ENCODE measurements at regions of chr19 and their contacts with region 1.

Region 1: GRCh38 chr19:6218491-6219162 is 61.1 kb downstream of the MLLT1 start:
- DNase-seq: no peak
- H3K4me3 ChIP-seq: no peak overlapping the region
- H3K27ac ChIP-seq: peak overlapping the region; percentile 39
- H3K27me3 ChIP-seq: no peaks in the 10 kb centered on the region
- CTCF ChIP-seq: peak; percentile 94

Region 2: DNA sequence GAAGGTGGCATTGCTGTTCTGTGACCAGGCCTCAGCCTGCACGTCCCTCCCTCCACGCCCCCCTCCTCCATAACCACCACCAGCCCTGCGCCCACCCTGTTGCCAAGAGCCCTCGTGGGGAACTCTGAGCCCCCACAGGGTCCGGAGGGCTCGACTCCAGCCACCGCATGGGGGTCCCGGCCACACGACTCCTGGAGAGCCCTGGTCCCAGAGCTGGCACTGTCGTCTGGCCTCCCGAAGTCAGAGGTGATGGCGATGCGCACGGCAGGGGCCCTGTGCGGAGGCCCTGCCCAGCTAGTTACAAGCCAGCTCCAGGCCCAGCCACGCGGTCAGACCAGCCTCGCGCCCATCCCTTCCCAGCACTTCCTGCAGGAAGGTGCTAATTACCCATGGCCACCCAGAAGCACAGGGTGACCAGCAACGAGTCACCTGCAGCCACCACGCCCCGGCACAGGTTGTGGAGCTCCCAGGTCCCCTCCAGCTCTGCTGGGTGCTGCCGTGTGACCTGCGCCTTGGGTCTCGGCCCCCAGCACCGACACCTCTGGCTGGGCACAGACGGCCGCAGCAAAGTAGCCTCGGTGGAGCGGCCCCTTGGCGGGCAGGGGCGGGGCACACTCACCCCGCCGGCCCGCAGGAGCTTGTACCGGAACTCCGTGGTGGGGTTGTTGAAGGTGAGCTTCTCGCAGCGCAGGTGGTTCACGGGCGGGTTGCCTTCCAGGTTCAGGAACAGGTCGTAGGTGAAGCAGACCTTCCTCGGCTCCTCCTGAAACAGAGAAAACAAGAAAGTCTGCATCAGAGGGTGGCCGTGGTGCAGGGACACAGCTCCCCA is 11.5 kb after region 1 on chr19:
- CTCF ChIA-PET with region 1: interaction called, 26 read pairs
- POLR2A ChIA-PET with region 1: no interaction called
- DNase-seq: no peak
- H3K4me3 ChIP-seq: no peak overlapping the region
- H3K27ac ChIP-seq: no peak overlapping the region
- H3K27me3 ChIP-seq: no peaks in the 10 kb centered on the region
- CTCF ChIP-seq: no peak

Region 3: DNA sequence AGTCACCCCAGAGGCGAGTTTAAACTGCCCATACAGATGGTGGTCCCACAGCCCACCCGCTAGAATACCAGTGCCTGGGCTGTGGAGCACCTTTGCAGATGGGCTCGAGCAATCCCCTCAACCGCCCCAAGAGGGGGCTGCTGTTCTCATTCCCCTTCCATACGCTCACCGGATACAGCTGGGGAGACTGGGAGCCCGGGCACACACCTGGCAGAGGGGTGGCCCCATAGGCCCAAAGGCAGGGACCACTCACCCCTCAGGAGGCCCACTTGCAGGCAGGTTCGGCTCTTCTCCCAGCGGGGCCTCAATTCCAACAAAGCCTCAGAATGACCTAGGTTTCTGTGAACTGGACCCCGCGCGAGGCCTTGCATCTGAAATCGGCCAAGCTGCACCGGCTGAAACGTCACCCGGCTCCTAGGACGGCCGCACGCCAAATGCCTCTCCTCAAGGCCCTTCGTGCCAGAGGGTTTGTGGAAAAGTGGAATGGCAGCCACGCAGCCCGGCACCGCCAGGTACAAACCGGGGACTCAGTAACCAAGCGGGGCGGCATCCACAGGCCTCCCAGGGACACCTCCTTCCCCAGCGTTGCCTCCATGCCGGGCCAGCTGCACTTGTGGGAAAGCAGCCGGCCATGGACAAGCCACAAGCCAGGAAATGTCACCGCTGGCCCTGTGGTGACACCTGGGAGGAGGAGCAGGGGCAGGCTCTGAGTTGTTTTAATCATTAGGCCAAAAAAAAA is 42.5 kb after region 1 on chr19:
- CTCF ChIA-PET with region 1: interaction called, 14 read pairs
- POLR2A ChIA-PET with region 1: no interaction called
- DNase-seq: no peak
- H3K4me3 ChIP-seq: no peak overlapping the region
- H3K27ac ChIP-seq: no peak overlapping the region
- H3K27me3 ChIP-seq: no peaks in the 10 kb centered on the region
- CTCF ChIP-seq: peak; percentile 59

Region 4: GRCh38 chr19:6279931-6280591 is 61.4 kb after region 1 on chr19 and contains the start of gene MLLT1:
- CTCF ChIA-PET with region 1: interaction called, 13 read pairs
- POLR2A ChIA-PET with region 1: no interaction called
- DNase-seq: peak; percentile 93
- H3K4me3 ChIP-seq: peak within 1 kb of the TSS; percentile 84
- H3K27ac ChIP-seq: no peak within 1 kb of the TSS
- H3K27me3 ChIP-seq: no peaks in the 10 kb centered on the region
- CTCF ChIP-seq: peak; percentile 52
- polyA plus RNA-seq, gene MLLT1: 12.3 and 15.3 TPM in 2 replicates

Region 5: DNA sequence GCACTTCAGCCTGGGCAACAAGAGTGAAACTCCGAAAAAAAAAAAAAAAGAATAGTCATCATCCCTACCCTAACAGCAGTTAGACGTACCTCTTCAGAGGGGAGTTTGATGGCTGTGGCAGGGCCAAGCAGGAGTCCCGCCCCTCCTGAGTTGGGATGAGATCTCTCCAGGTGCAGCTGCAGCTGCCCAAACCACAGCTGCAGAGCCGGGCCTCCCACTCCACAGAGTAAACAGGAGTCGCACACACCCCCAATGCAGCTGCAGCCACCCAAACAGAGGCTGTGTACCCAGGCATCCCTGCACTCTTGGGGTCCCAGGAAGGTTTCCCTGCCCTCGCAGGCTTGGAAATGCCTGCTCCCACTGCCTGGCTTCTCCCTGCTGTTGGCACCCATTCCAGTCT is 78.6 kb after region 1 on chr19:
- CTCF ChIA-PET with region 1: interaction called, 58 read pairs
- POLR2A ChIA-PET with region 1: interaction called, 3 read pairs
- DNase-seq: no peak
- H3K4me3 ChIP-seq: no peak overlapping the region
- H3K27ac ChIP-seq: no peak overlapping the region
- H3K27me3 ChIP-seq: peaks cover 5% of the 10 kb centered on the region
- CTCF ChIP-seq: no peak